Spleen (tissue), 13 donors: ENCODE measurements at regions of chr6 and their contacts with region 1.

Region 1: GRCh38 chr6:26103770-26104456 is 16.7 kb downstream of the HFE start:
- DNase-seq: peak; percentile 95
- H3K4me3 ChIP-seq: peak overlapping the region; percentile 4 to 74 (median 40)
- H3K27ac ChIP-seq: peak overlapping the region; percentile 92 to 96 (median 94)
- H3K4me1 ChIP-seq: peaks cover 0 to 20% (median 14%) of the 10 kb centered on the region in 6 donors
- H3K27me3 ChIP-seq: no peaks in the 10 kb centered on the region
- CTCF ChIP-seq: peak in 10 of 11 experiments; percentile 32 to 67 (median 53)
- POLR2A ChIP-seq: peak; percentile 94 to 99 (median 99)

Region 2: DNA sequence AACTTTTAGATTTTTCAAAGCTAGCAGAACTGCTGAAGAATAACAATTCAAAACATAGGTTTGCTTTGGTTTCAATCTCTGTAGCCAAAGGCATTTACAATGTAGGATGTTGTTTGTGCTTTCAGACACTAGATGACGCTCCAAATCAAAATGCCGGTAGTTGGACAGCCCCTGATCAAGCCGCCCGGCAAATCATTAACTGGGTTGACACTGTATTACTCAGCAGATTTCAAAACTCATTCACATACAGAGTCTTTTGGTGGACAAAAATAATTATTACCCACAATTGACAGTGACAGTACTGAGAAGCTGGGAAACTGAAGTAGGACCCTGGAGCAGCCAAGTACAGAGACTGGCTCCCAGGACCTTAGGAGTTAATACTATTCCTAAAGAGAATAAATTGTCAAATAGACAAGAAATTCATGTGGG is 37.9 kb before region 1 on chr6:
- intact Hi-C with region 1: loop called (anchors 2 kb)
- DNase-seq: no peak
- H3K4me3 ChIP-seq: no peak overlapping the region
- H3K27ac ChIP-seq: peak overlapping the region in 4 of 8 donors; percentile 14 to 54 (median 36)
- H3K4me1 ChIP-seq: peaks cover 0 to 23% (median 9%) of the 10 kb centered on the region in 6 donors
- H3K27me3 ChIP-seq: no peaks in the 10 kb centered on the region
- CTCF ChIP-seq: peak; percentile 33 to 83 (median 79)
- POLR2A ChIP-seq: no peak

Region 3: GRCh38 chr6:26204332-26205165 is 100.6 kb after region 1 on chr6:
- intact Hi-C with region 1: no loop called
- DNase-seq: peak; percentile 95
- H3K4me3 ChIP-seq: peak overlapping the region; percentile 33 to 79 (median 50)
- H3K27ac ChIP-seq: peak overlapping the region; percentile 95 to 100 (median 99)
- H3K4me1 ChIP-seq: peaks cover 0 to 54% (median 27%) of the 10 kb centered on the region in 6 donors
- H3K27me3 ChIP-seq: no peaks in the 10 kb centered on the region
- CTCF ChIP-seq: peak in 10 of 11 experiments; percentile 6 to 60 (median 48)
- POLR2A ChIP-seq: peak; percentile 71 to 98 (median 97)